ENCODE measurements at regions of chr9 and their contacts with region 1.

Region 1: DNA sequence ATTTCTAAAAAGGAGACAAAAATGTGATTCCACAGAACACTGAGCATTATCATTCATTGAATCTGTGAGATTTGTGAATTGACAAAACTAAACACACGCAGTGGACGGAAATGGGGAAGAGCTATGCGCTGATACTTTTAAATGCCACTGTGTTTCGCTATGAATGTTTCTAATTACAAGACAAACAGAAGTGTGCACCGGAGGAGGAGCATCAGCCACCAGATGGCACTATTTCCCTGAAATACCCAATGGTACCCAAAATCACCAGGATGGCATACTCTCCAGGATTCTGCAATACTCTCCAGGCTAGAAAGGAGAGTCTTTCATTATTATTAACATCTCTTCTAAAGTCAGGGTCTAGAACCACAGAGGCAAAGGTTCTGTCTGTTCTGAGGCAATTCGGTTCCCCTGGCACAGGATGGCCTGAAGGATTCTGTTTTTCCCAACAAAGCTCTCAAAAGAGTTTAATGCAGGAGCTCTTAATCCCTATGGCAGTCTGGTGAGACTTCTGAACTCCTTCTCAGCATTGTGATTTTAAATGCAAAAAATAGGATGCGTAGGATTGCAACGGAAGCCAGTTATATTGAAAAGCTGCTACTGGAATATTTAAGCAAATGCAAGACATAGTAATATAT is 13.8 kb upstream of the PUM3 start:
- DNase-seq: peak; percentile 75
- CTCF ChIP-seq: peak; percentile 78

Region 2: DNA sequence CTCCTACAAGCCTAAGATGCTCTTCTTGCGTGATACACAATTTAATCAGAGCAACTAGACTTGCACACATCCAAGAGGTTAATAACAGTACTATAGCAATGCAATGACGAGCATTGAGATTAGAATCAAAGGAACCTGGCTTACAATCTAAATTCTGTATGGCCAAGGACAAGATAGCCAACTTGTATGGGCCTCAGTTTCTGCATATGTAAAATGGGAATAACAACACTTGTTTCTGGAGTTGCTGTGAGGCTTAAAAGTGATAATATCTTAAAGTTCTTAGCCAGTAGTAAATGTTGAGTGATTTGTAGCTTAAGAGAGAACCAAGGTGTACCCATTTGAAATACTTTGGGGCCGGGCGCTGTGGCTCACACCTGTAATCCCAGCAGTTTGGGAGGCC is 11.6 kb before region 1 on chr9:
- CTCF ChIA-PET with region 1: interaction called, 16 read pairs
- POLR2A ChIA-PET with region 1: no interaction called
- DNase-seq: no peak
- CTCF ChIP-seq: no peak

Region 3: DNA sequence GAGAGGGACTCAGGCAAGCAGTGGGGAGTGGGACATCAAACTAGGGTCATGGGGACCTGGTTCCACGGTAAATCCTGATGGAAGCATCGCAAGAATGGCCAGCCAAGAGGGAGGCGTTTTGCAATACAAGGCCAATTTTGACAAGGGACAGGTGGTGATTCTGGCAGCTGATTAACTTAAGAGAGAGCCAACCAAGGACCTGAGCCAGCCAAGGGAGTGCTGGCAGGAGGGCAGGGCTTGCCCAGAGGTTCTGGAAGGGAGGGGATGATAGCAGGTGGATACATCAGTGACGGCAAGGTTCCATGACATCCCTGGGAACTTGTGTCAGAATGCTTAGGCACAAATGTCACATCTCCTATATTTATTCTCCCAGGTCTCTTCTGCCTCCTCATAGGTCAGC is 19.0 kb after region 1 on chr9:
- CTCF ChIA-PET with region 1: interaction called, 13 read pairs
- POLR2A ChIA-PET with region 1: no interaction called
- DNase-seq: no peak
- CTCF ChIP-seq: no peak

Measured in GM10248 (cell line).